Activated naive CD4-positive, alpha-beta T cell treated with anti-CD3 and anti-CD28 coated beads, Interleukin-2, amount 10 ng/mL, durations not matched to agents 7 days and 5 days (primary cell): ENCODE measurements at regions of chr17 and their contacts with region 1.

Region 1: GRCh38 chr17:57597531-57598453 is 147.3 kb downstream of the CCDC182 start:
- DNase-seq: peak; percentile 62
- H3K4me3 Mint-ChIP-seq: no peak overlapping the region
- H3K27ac Mint-ChIP-seq: peak overlapping the region; percentile 75
- H3K4me1 Mint-ChIP-seq: peaks cover 55% of the 10 kb centered on the region
- H3K27me3 Mint-ChIP-seq: no peaks in the 10 kb centered on the region

Region 2: GRCh38 chr17:57671667-57672632 is 74.2 kb after region 1 on chr17:
- CTCF ChIA-PET with region 1: interaction called, 138 read pairs
- DNase-seq: peak; percentile 79
- H3K4me3 Mint-ChIP-seq: peak overlapping the region; percentile 10
- H3K27ac Mint-ChIP-seq: peak overlapping the region; percentile 88
- H3K4me1 Mint-ChIP-seq: peaks cover 28% of the 10 kb centered on the region
- H3K27me3 Mint-ChIP-seq: no peaks in the 10 kb centered on the region

Region 3: GRCh38 chr17:57739402-57740392 is 141.9 kb after region 1 on chr17:
- CTCF ChIA-PET with region 1: interaction called, 24 read pairs
- DNase-seq: no peak
- H3K4me3 Mint-ChIP-seq: no peak overlapping the region
- H3K27ac Mint-ChIP-seq: no peak overlapping the region
- H3K4me1 Mint-ChIP-seq: peaks cover 5% of the 10 kb centered on the region
- H3K27me3 Mint-ChIP-seq: peaks cover 54% of the 10 kb centered on the region

Region 4: DNA sequence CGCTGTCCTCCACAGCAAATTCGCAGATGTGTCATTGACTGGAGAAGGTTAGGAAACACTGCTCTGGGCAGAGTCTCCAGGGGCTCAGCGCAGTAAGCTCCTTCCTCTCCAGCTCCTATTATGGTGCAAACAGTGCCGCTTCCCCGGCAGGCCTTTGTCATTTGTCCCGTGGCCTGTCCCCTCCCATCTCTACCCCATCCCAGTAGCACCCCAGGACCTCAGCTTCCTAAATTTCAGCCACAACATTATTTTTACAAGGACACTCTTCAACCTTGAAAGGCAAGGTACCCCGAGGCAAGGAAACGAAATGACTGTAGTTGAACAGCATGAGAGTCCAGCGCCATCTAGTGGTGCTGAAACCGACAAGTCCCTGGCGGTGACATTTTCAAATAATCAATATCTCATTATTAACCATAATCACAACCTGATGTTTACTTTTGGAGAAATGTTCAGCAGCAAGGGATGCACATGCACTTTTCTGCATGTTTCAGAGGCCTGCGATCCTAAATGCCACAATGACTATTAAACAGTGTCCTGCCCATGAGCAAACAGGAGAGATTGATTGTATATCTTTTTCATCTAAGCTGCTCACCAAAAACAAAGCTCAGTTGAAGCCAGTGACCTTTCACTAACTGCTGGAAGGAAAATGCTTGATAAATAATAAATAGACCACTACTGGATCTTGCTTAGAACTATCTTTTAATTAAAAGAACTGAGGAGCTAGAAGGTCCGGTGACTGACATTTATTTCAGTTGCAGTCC is 235.6 kb after region 1 on chr17:
- CTCF ChIA-PET with region 1: interaction called, 10 read pairs
- DNase-seq: peak; percentile 79
- H3K4me3 Mint-ChIP-seq: no peak overlapping the region
- H3K27ac Mint-ChIP-seq: no peak overlapping the region
- H3K4me1 Mint-ChIP-seq: peaks cover 2% of the 10 kb centered on the region
- H3K27me3 Mint-ChIP-seq: peaks cover 6% of the 10 kb centered on the region